Ovary (tissue), 10 donors: ENCODE measurements at regions of chr15 and their contacts with region 1.

Region 1: GRCh38 chr15:100341662-100342560 is at the start of gene ADAMTS17:
- DNase-seq: peak; percentile 96 to 98 (median 97)
- H3K4me3 ChIP-seq: peak within 1 kb of the TSS; percentile 52
- H3K27ac ChIP-seq: peak within 1 kb of the TSS; percentile 16 to 41
- H3K4me1 ChIP-seq: no peaks in the 10 kb centered on the region
- H3K27me3 ChIP-seq: no peaks in the 10 kb centered on the region
- CTCF ChIP-seq: peak; percentile 91 to 98 (median 95)
- EP300 ChIP-seq: no peak
- POLR2A ChIP-seq: peak; percentile 84
- total RNA-seq, gene ADAMTS17: 3.0 to 11.3 (median 7.9) TPM

Region 2: DNA sequence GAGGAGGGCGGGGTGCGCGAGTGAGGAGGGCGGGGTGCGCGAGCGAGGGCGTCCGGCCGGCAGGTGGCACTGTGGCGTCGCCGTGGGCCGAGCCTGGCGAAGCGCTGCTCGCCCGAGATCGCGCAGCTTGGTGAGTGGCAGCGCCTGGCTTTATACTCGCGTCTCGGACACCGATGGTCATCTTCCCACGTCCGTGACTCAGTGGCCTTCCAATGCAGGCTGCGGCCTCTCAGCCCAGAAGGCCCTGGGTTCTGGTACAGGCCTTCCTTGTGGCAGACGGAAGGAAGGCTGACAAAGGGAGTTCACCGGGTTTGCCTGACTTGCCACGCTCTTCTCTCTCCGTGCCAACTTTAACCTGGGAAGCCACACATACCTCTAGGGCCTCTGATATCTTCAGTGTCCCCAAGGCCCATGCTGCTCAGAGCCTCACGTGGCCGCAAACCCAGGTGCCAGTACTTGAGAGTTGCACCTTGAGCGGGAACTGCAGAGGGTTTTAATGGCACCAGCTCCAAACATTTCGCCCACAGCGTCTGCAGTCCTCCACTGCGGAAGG is 413.4 kb before region 1 on chr15:
- intact Hi-C with region 1: loop called in 1 of 4 experiments (anchors 5 kb)
- DNase-seq: peak; percentile 56 to 90 (median 86)
- H3K4me3 ChIP-seq: peak overlapping the region; percentile 39
- H3K27ac ChIP-seq: peak overlapping the region; percentile 79 to 88
- H3K4me1 ChIP-seq: peaks cover 1% of the 10 kb centered on the region
- H3K27me3 ChIP-seq: no peaks in the 10 kb centered on the region
- CTCF ChIP-seq: peak; percentile 50 to 64 (median 59)
- EP300 ChIP-seq: no peak
- POLR2A ChIP-seq: no peak

Region 3: DNA sequence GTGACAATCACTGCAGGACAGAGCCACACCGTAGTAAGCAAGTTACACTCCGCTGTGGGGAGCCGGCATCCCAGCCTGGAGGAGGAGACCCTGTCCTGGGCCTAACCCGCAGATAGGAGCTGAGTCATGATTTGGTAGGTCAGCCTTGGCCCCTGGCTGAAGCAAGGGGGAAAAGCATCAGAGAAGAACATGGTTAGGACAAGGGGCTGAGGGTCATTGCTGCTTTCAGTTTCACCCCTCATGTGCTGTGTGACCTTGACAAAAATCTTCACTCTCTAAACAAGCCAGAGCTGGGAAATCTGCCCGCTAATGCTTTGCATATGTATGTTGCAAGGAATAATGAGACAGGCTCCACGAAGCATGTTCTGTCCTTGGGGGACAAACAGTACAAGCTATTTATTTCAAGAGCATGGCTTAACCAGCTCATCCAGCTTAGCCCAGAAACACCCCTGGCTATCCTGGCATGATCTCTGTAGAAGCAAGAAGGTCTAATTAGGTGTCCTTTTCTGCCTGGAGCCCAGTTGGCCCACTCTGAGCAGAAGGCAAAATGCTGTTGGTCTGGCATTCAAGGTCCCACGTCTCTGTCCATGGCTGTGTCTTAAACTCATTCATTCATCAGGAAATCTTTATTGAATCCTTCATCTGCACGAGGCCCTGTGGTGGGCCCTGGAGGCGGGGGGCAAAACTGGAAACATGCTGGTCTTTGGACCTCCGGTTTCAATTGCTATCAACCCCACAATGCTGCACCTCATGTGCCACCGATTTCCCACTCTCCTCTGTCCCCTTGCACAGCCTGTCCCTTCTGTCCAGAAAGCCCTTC is 387.3 kb before region 1 on chr15:
- intact Hi-C with region 1: loop called in 2 of 4 experiments (anchors 10 kb)
- DNase-seq: peak; percentile 56 to 83 (median 78)
- H3K4me3 ChIP-seq: no peak overlapping the region
- H3K27ac ChIP-seq: peak overlapping the region in 1 of 2 donors; percentile 66
- H3K4me1 ChIP-seq: peaks cover 12% of the 10 kb centered on the region
- H3K27me3 ChIP-seq: no peaks in the 10 kb centered on the region
- CTCF ChIP-seq: no peak
- EP300 ChIP-seq: no peak
- POLR2A ChIP-seq: no peak

Region 4: GRCh38 chr15:100125401-100126191 is 216.3 kb before region 1 on chr15:
- intact Hi-C with region 1: loop called in 1 of 4 experiments (anchors 5 kb)
- DNase-seq: peak; percentile 88 to 93 (median 89)
- H3K4me3 ChIP-seq: no peak overlapping the region
- H3K27ac ChIP-seq: peak overlapping the region in 1 of 2 donors; percentile 82
- H3K4me1 ChIP-seq: peaks cover 8% of the 10 kb centered on the region
- H3K27me3 ChIP-seq: no peaks in the 10 kb centered on the region
- CTCF ChIP-seq: no peak
- EP300 ChIP-seq: peak; percentile 72
- POLR2A ChIP-seq: no peak

Region 5: DNA sequence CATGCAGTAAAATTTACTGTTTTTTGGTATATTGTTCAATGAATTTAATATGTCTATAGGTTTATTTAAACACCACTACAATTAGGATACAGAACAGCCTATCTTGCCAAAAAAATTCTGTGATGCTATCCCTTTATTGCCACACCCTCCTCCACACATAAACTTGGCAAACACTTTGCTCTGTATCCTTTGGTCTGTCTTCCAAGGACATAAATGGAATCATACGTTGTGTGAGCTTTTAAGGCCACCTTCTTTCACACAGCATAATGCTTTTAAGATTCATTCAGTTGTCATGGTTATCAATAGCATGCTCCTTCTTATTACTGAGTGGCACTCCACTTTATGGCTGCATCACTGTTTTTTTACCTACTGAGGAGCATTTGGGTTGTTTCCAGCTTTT is 115.3 kb after region 1 on chr15:
- intact Hi-C with region 1: no loop called
- DNase-seq: no peak
- H3K4me3 ChIP-seq: no peak overlapping the region
- H3K27ac ChIP-seq: no peak overlapping the region
- H3K4me1 ChIP-seq: no peaks in the 10 kb centered on the region
- H3K27me3 ChIP-seq: no peaks in the 10 kb centered on the region
- CTCF ChIP-seq: no peak
- EP300 ChIP-seq: no peak
- POLR2A ChIP-seq: no peak

Region 6: GRCh38 chr15:101277038-101277882 is 935.3 kb after region 1 on chr15 and contains the start of gene SELENOS:
- intact Hi-C with region 1: loop called in 1 of 4 experiments (anchors 5 kb)
- DNase-seq: peak; percentile 91 to 97 (median 95)
- H3K4me3 ChIP-seq: peak within 1 kb of the TSS; percentile 98
- H3K27ac ChIP-seq: peak within 1 kb of the TSS; percentile 57 to 77
- H3K4me1 ChIP-seq: peaks cover 3% of the 10 kb centered on the region
- H3K27me3 ChIP-seq: no peaks in the 10 kb centered on the region
- CTCF ChIP-seq: peak in 1 of 3 donors; percentile 20
- EP300 ChIP-seq: no peak
- POLR2A ChIP-seq: peak; percentile 96
- total RNA-seq, gene SELENOS: 36.9 to 61.7 (median 42.7) TPM